Activated B cell treated with CpG ODN at 0.5 μM for 24 hours (primary cell): ENCODE measurements at regions of chr19 and their contacts with region 1.

Region 1: GRCh38 chr19:44093931-44094765 is at the start of gene ZNF224:
- DNase-seq: peak; percentile 66
- ATAC-seq: peak; percentile 93
- H3K4me3 Mint-ChIP-seq: peak within 1 kb of the TSS; percentile 99
- H3K27ac Mint-ChIP-seq: peak within 1 kb of the TSS; percentile 89
- H3K4me1 Mint-ChIP-seq: peaks cover 14% of the 10 kb centered on the region
- H3K27me3 Mint-ChIP-seq: no peaks in the 10 kb centered on the region
- CTCF ChIP-seq: no peak
- total RNA-seq, gene ZNF224: 49.2 and 53.3 TPM in 2 replicates

Region 2: GRCh38 chr19:43983912-43984686 is 110.0 kb before region 1 on chr19 and contains the start of gene ZNF155:
- CTCF ChIA-PET with region 1: no interaction called
- POLR2A ChIA-PET with region 1: no interaction called
- intact Hi-C with region 1: loop called (anchors 1 kb)
- DNase-seq: peak; percentile 57
- ATAC-seq: peak; percentile 91
- H3K4me3 Mint-ChIP-seq: peak within 1 kb of the TSS; percentile 95
- H3K27ac Mint-ChIP-seq: peak within 1 kb of the TSS; percentile 86
- H3K4me1 Mint-ChIP-seq: peaks cover 10% of the 10 kb centered on the region
- H3K27me3 Mint-ChIP-seq: no peaks in the 10 kb centered on the region
- CTCF ChIP-seq: no peak
- total RNA-seq, gene ZNF155: 7.0 and 9.4 TPM in 2 replicates

Region 3: GRCh38 chr19:44051654-44052402 is 42.3 kb before region 1 on chr19 and contains the start of gene ZNF223:
- CTCF ChIA-PET with region 1: no interaction called
- POLR2A ChIA-PET with region 1: interaction called, 6 read pairs
- intact Hi-C with region 1: loop called (anchors 1 kb)
- DNase-seq: peak; percentile 37
- ATAC-seq: peak; percentile 86
- H3K4me3 Mint-ChIP-seq: peak within 1 kb of the TSS; percentile 94
- H3K27ac Mint-ChIP-seq: peak within 1 kb of the TSS; percentile 36
- H3K4me1 Mint-ChIP-seq: peaks cover 29% of the 10 kb centered on the region
- H3K27me3 Mint-ChIP-seq: peaks cover 11% of the 10 kb centered on the region
- CTCF ChIP-seq: no peak
- total RNA-seq, gene ZNF223: 3.6 and 4.5 TPM in 2 replicates

Region 4: GRCh38 chr19:44141191-44142058 is 47.3 kb after region 1 on chr19 and contains the start of gene ZNF234:
- CTCF ChIA-PET with region 1: no interaction called
- POLR2A ChIA-PET with region 1: no interaction called
- intact Hi-C with region 1: loop called (anchors 1 kb)
- DNase-seq: peak; percentile 58
- ATAC-seq: peak; percentile 93
- H3K4me3 Mint-ChIP-seq: peak within 1 kb of the TSS; percentile 98
- H3K27ac Mint-ChIP-seq: peak within 1 kb of the TSS; percentile 85
- H3K4me1 Mint-ChIP-seq: peaks cover 23% of the 10 kb centered on the region
- H3K27me3 Mint-ChIP-seq: no peaks in the 10 kb centered on the region
- CTCF ChIP-seq: no peak
- total RNA-seq, gene ZNF234: 14.8 and 18.8 TPM in 2 replicates

Region 5: GRCh38 chr19:44182145-44182544 is 88.0 kb after region 1 on chr19:
- CTCF ChIA-PET with region 1: no interaction called
- POLR2A ChIA-PET with region 1: no interaction called
- intact Hi-C with region 1: no loop called
- DNase-seq: no peak
- ATAC-seq: no peak
- H3K4me3 Mint-ChIP-seq: no peak overlapping the region
- H3K27ac Mint-ChIP-seq: no peak overlapping the region
- H3K4me1 Mint-ChIP-seq: no peaks in the 10 kb centered on the region
- H3K27me3 Mint-ChIP-seq: no peaks in the 10 kb centered on the region
- CTCF ChIP-seq: no peak

Region 6: GRCh38 chr19:44304659-44305193 is 210.6 kb after region 1 on chr19 and contains the start of gene ZNF235:
- CTCF ChIA-PET with region 1: no interaction called
- POLR2A ChIA-PET with region 1: interaction called, 4 read pairs
- intact Hi-C with region 1: loop called (anchors 1 kb)
- DNase-seq: peak; percentile 61
- ATAC-seq: peak; percentile 97
- H3K4me3 Mint-ChIP-seq: peak within 1 kb of the TSS; percentile 96
- H3K27ac Mint-ChIP-seq: peak within 1 kb of the TSS; percentile 76
- H3K4me1 Mint-ChIP-seq: peaks cover 20% of the 10 kb centered on the region
- H3K27me3 Mint-ChIP-seq: peaks cover 7% of the 10 kb centered on the region
- CTCF ChIP-seq: no peak
- total RNA-seq, gene ZNF235: 11.6 and 14.5 TPM in 2 replicates